HAP-1 (cell line): ENCODE measurements at regions of chr14 and their contacts with region 1.

Region 1: DNA sequence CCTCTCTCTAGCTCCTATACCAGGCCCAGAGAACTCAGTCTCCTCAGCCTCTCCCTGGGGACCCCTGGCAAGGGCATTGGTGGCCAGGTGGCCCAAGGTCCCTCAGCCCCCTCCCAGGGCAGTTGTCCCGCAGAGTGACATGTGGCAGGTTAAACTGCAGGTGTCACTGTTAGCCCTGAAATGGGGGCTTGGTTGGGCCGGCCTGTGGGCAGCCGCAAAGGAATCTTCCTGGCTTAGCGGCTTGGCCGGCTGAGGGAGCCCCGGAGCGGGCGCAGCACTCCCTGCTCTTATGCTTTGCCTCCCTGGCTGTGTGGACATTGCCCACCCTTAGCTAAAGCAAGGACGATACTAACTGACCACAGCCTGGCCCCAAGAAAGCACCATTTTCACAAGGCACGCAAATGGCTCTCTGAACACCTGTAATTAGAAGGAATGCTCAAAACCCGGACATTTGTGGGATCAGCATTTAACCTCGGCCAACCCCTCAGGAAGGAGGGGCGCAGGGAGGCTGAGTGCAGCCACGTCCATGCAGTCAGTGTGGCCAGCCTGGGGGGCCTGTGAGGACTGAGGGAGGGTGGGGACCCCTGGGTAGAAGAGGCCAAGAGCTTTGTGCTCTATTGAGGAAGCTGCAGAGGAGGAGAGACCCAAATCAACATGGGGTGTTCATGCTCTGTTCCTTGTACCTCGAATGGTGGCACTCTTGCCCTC is 82.2 kb downstream of the PAPOLA start:
- DNase-seq: peak; percentile 84 to 88
- H3K4me3 ChIP-seq: no peak overlapping the region
- H3K4me1 ChIP-seq: peaks cover 21% of the 10 kb centered on the region
- H3K27me3 ChIP-seq: no peaks in the 10 kb centered on the region

Region 2: DNA sequence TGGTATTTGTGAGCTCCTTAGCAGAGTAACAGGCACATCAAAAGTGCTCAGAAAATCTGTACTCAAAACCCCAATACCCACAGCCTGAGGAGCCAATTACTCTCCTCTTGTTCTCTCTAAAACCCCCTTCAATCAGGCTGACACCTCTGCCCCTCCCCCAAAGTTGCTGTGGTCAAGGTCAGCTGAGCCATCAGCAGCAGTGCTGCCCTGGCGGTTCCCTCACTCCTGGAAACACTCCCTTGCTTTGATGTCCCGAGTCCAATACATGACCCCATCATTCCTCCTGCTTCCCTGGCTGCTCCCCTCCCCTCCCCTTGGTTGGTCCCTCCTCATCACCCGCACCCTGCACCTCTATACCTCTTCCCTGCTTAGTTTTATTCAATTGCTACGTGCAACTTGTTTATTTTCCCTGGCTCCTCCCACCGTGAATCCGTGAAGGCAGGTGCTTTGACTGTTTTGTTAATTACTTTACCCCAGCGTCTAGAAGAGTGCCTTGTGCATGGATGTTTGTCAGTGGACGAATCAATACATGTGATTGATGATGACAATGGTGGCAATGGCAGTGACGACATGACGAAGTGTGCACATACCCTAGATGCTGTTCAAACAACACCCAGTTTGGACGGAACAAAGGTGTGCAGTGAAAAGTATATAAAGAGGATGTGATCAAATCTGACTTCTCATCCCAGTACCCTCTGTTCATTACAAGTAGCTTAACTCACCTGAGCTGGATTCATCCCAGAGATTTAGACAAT is 602.2 kb before region 1 on chr14:
- in situ Hi-C with region 1: no loop called
- DNase-seq: no peak
- H3K4me3 ChIP-seq: no peak overlapping the region
- H3K4me1 ChIP-seq: peaks cover 9% of the 10 kb centered on the region
- H3K27me3 ChIP-seq: no peaks in the 10 kb centered on the region

Region 3: GRCh38 chr14:96741151-96741977 is 157.0 kb after region 1 on chr14:
- in situ Hi-C with region 1: loop called (anchors 5 kb)
- DNase-seq: peak; percentile 45 to 84
- H3K4me3 ChIP-seq: peak overlapping the region; percentile 31
- H3K4me1 ChIP-seq: peaks cover 8% of the 10 kb centered on the region
- H3K27me3 ChIP-seq: no peaks in the 10 kb centered on the region

Region 4: GRCh38 chr14:96852823-96853422 is 268.6 kb after region 1 on chr14:
- in situ Hi-C with region 1: loop called (anchors 25 kb)
- DNase-seq: peak; percentile 45 to 53
- H3K4me3 ChIP-seq: no peak overlapping the region
- H3K4me1 ChIP-seq: no peaks in the 10 kb centered on the region
- H3K27me3 ChIP-seq: no peaks in the 10 kb centered on the region